CD4-positive, alpha-beta T cell (primary cell): ENCODE measurements at regions of chr19 and their contacts with region 1.

Region 1: GRCh38 chr19:48110350-48110966 is at the start of gene PLA2G4C:
- DNase-seq: peak; percentile 63 to 92 (median 78)
- ATAC-seq: peak; percentile 83
- H3K4me3 ChIP-seq: peak within 1 kb of the TSS; percentile 75
- H3K4me3 Mint-ChIP-seq: peak within 1 kb of the TSS; percentile 89
- H3K27ac ChIP-seq: peak within 1 kb of the TSS; percentile 13 to 79
- H3K27ac Mint-ChIP-seq: peak within 1 kb of the TSS; percentile 86
- H3K4me1 ChIP-seq: peaks cover 21% of the 10 kb centered on the region
- H3K4me1 Mint-ChIP-seq: peaks cover 17% of the 10 kb centered on the region
- H3K27me3 ChIP-seq: no peaks in the 10 kb centered on the region
- H3K27me3 Mint-ChIP-seq: no peaks in the 10 kb centered on the region
- CTCF ChIP-seq: no peak
- total RNA-seq, gene PLA2G4C: 1.9 TPM

Region 2: GRCh38 chr19:48135411-48135810 is 25.0 kb after region 1 on chr19:
- CTCF ChIA-PET with region 1: no interaction called
- POLR2A ChIA-PET with region 1: no interaction called
- intact Hi-C with region 1: no loop called
- DNase-seq: no peak
- ATAC-seq: no peak
- H3K4me3 ChIP-seq: no peak overlapping the region
- H3K4me3 Mint-ChIP-seq: no peak overlapping the region
- H3K27ac ChIP-seq: no peak overlapping the region
- H3K27ac Mint-ChIP-seq: no peak overlapping the region
- H3K4me1 ChIP-seq: no peaks in the 10 kb centered on the region
- H3K4me1 Mint-ChIP-seq: no peaks in the 10 kb centered on the region
- H3K27me3 ChIP-seq: no peaks in the 10 kb centered on the region
- H3K27me3 Mint-ChIP-seq: no peaks in the 10 kb centered on the region
- CTCF ChIP-seq: no peak

Region 3: DNA sequence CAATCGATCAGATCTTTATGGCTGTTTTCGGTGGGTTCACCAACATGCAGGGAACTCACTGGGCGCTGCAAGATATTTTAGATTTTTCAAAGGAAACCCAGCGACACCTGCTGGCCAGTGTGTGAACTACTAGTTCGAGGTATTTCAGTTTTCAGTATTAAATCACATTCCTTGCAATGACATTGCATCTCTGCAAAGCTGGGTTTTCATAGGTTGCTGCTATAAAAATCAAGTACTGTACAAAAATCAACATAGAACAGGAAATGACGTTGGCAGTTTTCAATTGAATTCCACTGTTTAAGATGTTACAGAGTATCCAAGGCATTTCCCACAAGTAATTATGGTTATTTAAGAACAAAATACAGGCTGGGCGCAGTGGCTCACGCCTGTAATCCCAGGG is 42.1 kb after region 1 on chr19:
- CTCF ChIA-PET with region 1: no interaction called
- POLR2A ChIA-PET with region 1: no interaction called
- intact Hi-C with region 1: loop called (anchors 1 to 2 kb)
- DNase-seq: peak; percentile 32 to 78 (median 62)
- ATAC-seq: peak; percentile 75
- H3K4me3 ChIP-seq: no peak overlapping the region
- H3K4me3 Mint-ChIP-seq: no peak overlapping the region
- H3K27ac ChIP-seq: no peak overlapping the region
- H3K27ac Mint-ChIP-seq: no peak overlapping the region
- H3K4me1 ChIP-seq: no peaks in the 10 kb centered on the region
- H3K4me1 Mint-ChIP-seq: peaks cover 5% of the 10 kb centered on the region
- H3K27me3 ChIP-seq: no peaks in the 10 kb centered on the region
- H3K27me3 Mint-ChIP-seq: no peaks in the 10 kb centered on the region
- CTCF ChIP-seq: peak; percentile 95

Region 4: DNA sequence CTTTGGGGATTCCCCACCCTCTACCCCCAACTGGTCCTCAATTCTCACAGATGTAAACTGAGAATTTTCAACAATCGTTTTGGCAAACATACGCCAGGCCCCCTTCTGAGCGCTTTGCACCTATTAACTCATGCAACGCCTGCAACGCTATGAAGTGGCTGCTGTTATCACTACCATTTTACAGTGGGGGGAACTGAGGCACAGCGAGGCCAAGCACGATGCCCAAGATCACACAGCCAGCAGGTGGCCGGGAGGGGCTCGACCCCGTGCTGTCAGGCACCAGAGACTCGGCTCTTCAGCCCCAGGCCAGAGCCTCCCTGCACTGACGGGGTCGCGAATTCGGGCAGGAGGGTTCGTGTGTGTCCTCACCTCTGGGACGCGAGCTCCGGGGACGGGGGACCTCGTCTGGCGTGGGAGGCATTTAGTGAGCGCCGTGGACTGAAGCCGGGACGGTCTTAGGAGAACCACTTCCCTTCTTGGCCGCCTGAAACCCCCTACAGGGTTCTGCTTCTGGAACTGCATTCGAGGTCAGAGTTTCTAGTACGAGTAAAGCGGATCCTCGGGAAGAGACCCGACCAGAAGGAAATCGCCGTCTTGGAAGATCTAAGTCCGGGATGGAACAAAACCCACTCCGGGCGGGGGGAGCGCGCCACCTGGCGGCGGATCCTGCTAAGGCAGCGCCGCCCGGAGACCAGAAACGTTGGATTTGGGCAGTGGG is 180.5 kb after region 1 on chr19:
- CTCF ChIA-PET with region 1: no interaction called
- POLR2A ChIA-PET with region 1: no interaction called
- intact Hi-C with region 1: loop called in 1 of 2 experiments (anchors 2 kb)
- DNase-seq: peak; percentile 24 to 79 (median 54)
- ATAC-seq: peak; percentile 61
- H3K4me3 ChIP-seq: peak overlapping the region; percentile 58
- H3K4me3 Mint-ChIP-seq: peak overlapping the region; percentile 76
- H3K27ac ChIP-seq: no peak overlapping the region
- H3K27ac Mint-ChIP-seq: no peak overlapping the region
- H3K4me1 ChIP-seq: peaks cover 10% of the 10 kb centered on the region
- H3K4me1 Mint-ChIP-seq: no peaks in the 10 kb centered on the region
- H3K27me3 ChIP-seq: peaks cover 0 to 2% of the 10 kb centered on the region in 2 experiments
- H3K27me3 Mint-ChIP-seq: peaks cover 14% of the 10 kb centered on the region
- CTCF ChIP-seq: peak; percentile 99